Tibial artery (tissue), 4 donors: ENCODE measurements at regions of chr6 and their contacts with region 1.

Region 1: DNA sequence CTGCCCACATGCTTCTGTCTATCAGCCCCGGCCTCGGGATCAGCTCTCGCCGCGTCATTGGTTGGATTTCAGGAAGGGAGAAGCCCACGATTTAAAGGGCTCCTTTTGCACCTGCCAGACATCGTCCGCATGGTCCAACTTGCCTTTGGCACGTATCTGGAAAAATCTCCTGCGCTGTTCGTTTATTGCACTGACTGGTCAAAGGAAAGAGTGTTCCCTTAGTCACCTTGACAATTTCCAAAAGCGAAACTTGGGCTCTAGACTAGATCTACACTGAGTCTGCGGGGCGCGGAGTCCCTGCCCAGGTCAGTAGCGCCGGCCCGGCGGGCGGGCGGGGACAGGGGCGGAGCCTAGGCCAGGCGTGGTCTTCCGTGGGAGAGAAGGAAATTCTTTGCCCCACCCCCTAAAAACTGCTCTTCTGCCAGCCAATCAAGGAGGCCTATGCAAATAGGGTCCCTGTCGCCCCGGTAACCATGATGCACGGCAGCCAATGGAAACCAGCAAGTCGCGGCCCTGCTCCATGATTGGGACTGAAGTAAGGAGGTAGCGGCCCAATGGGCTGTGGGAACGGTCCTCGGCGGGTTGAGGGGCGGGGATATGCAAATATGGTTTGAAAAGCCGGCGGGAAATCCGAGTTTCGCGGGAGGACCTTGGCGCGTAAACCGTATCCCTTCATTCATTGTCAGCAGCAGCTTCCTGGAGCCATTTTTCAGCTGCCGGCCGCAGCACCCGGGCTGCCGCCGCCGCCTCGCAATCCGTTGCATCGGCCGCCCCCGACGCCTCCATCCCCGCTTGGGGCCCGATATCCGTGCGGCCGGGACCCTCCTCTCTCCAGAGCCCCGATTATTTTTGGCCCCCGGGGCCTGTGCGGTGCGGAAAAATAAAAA is at the start of gene E2F3:
- DNase-seq: peak; percentile 100
- H3K4me3 ChIP-seq: peak within 1 kb of the TSS; percentile 87 to 88
- H3K27ac ChIP-seq: peak within 1 kb of the TSS; percentile 91 to 94
- H3K4me1 ChIP-seq: peaks cover 0 to 18% (median 3%) of the 10 kb centered on the region in 4 donors
- H3K27me3 ChIP-seq: no peaks in the 10 kb centered on the region
- CTCF ChIP-seq: no peak

Region 2: GRCh38 chr6:19845266-19846041 is 556.0 kb before region 1 on chr6:
- intact Hi-C with region 1: loop called (anchors 5 kb)
- DNase-seq: no peak
- H3K4me3 ChIP-seq: no peak overlapping the region
- H3K27ac ChIP-seq: peak overlapping the region; percentile 97 to 98
- H3K4me1 ChIP-seq: peaks cover 0 to 68% (median 17%) of the 10 kb centered on the region in 4 donors
- H3K27me3 ChIP-seq: no peaks in the 10 kb centered on the region
- CTCF ChIP-seq: no peak

Region 3: GRCh38 chr6:19976411-19977129 is 424.9 kb before region 1 on chr6:
- intact Hi-C with region 1: no loop called
- DNase-seq: no peak
- H3K4me3 ChIP-seq: no peak overlapping the region
- H3K27ac ChIP-seq: no peak overlapping the region
- H3K4me1 ChIP-seq: no peaks in the 10 kb centered on the region
- H3K27me3 ChIP-seq: no peaks in the 10 kb centered on the region
- CTCF ChIP-seq: no peak

Region 4: GRCh38 chr6:20212392-20213217 is 188.8 kb before region 1 on chr6 and contains the start of gene MBOAT1:
- intact Hi-C with region 1: loop called (anchors 10 kb)
- DNase-seq: peak; percentile 90 to 96
- H3K4me3 ChIP-seq: peak within 1 kb of the TSS; percentile 90 to 95
- H3K27ac ChIP-seq: peak within 1 kb of the TSS; percentile 86 to 89
- H3K4me1 ChIP-seq: peaks cover 0 to 38% (median 20%) of the 10 kb centered on the region in 4 donors
- H3K27me3 ChIP-seq: no peaks in the 10 kb centered on the region
- CTCF ChIP-seq: peak; percentile 16 to 18

Region 5: DNA sequence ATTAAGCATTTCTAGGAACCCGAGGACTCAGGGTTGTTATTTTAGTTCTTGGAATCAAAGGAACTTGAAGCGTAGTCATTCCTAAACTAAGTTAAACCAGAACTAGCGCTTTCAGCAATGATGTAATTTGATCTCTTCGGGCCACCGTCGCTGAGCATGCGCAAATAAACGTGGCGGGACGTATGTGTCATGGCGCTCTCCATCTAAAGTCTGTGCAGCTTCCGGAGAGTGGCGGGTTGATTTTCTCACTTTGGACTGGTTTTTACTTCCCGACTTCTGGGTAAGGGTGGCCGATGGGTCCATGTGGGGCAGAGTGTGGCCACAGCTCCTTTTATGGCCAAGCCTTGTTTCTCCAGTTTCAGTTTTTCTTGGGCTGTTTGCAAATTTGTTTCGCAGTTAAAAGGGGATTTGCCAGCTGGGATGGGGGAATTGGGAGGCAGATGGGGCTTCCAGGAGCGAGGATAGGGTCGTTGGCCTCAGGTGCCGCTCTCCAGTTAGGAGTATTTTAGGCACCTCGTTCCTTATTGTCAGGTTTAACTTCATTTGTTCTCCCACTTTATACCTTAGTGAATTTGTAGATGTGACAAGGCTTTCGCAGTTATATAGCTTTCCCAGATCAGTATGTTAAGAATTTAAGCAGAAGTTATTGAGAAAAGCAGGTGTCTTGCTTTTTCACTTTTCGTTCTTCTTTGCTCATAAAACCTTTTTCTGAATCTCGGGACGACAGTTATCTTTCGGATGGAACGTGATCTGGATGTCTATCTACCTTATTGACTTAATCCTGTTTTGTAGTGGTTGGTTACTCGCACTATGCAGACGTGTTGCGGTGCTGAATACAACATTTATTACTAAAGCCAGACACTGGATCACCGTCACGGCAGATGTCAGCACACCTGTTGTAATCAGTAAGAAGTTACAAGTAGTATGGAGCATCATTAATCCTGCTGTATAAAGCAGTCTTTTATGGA is 133.1 kb after region 1 on chr6 and contains the start of gene CDKAL1:
- intact Hi-C with region 1: loop called (anchors 5 kb)
- DNase-seq: peak; percentile 91 to 93
- H3K4me3 ChIP-seq: peak within 1 kb of the TSS; percentile 77 to 83
- H3K27ac ChIP-seq: peak within 1 kb of the TSS; percentile 85 to 86
- H3K4me1 ChIP-seq: peaks cover 0 to 22% (median 19%) of the 10 kb centered on the region in 4 donors
- H3K27me3 ChIP-seq: no peaks in the 10 kb centered on the region
- CTCF ChIP-seq: no peak

Region 6: DNA sequence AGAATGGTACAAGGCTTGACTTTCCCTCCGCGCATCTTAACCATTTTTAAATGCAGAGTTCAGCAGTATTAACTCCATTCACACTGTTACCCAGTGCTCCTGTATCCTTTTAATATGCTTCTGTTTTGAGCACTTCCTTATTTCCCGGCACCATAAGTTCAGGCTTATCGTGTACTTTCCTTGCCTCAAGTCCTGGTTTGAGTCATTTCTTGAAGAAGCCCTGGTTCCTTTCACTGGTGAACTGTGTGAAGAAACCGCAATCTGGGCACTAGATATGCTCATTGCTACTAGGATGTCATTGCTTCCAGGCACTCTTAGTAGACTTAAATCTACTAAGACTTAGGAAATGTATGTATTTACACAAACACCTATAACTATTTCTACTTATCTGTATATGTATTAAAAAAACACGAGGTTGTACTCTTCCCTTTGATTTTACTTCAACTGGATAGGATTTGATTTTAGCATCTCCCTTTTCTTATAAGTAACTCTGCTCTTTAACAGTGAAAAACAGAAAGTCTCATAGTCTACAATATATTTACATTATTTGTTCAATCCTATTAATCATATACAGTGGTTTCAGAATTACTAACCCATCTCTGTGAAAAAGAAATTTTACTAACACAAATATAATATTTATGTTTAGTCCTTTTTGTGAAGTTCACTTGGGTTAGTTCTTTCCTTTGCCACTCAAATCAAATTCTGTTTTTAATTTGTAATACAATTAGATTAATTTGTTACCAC is 268.3 kb after region 1 on chr6:
- intact Hi-C with region 1: no loop called
- DNase-seq: no peak
- H3K4me3 ChIP-seq: no peak overlapping the region
- H3K27ac ChIP-seq: no peak overlapping the region
- H3K4me1 ChIP-seq: no peaks in the 10 kb centered on the region
- H3K27me3 ChIP-seq: no peaks in the 10 kb centered on the region
- CTCF ChIP-seq: no peak

Region 7: GRCh38 chr6:20680697-20681165 is 279.3 kb after region 1 on chr6:
- intact Hi-C with region 1: no loop called
- DNase-seq: no peak
- H3K4me3 ChIP-seq: no peak overlapping the region
- H3K27ac ChIP-seq: no peak overlapping the region
- H3K4me1 ChIP-seq: peaks cover 0 to 14% (median 0%) of the 10 kb centered on the region in 4 donors
- H3K27me3 ChIP-seq: no peaks in the 10 kb centered on the region
- CTCF ChIP-seq: no peak